PC-9 (cell line): ENCODE measurements at regions of chr5 and their contacts with region 1.

Region 1: GRCh38 chr5:92927291-92927778 is 653.7 kb downstream of the NR2F1-AS1 start:
- DNase-seq: peak; percentile 56 to 77
- H3K4me3 ChIP-seq: no peak overlapping the region
- H3K27ac ChIP-seq: peak overlapping the region; percentile 44
- H3K4me1 ChIP-seq: peaks cover 17% of the 10 kb centered on the region
- H3K27me3 ChIP-seq: no peaks in the 10 kb centered on the region
- CTCF ChIP-seq: no peak

Region 2: GRCh38 chr5:93078082-93079038 is 151.0 kb after region 1 on chr5:
- CTCF ChIA-PET with region 1: no interaction called
- POLR2A ChIA-PET with region 1: no interaction called
- intact Hi-C with region 1: loop called (anchors 5 kb)
- DNase-seq: peak; percentile 81 to 99
- H3K4me3 ChIP-seq: peak overlapping the region; percentile 43; the same call in 1 of the 2 replicates
- H3K27ac ChIP-seq: peak overlapping the region; percentile 94
- H3K4me1 ChIP-seq: peaks cover 35% of the 10 kb centered on the region
- H3K27me3 ChIP-seq: no peaks in the 10 kb centered on the region
- CTCF ChIP-seq: no peak